ENCODE measurements at regions of chr3 and their contacts with region 1.

Region 1: GRCh38 chr3:30606301-30607031 is at the start of gene TGFBR2:
- DNase-seq: peak; percentile 90
- H3K4me3 Mint-ChIP-seq: peak within 1 kb of the TSS; percentile 91
- H3K27ac Mint-ChIP-seq: peak within 1 kb of the TSS; percentile 98
- H3K4me1 Mint-ChIP-seq: peaks cover 67% of the 10 kb centered on the region
- H3K27me3 Mint-ChIP-seq: no peaks in the 10 kb centered on the region

Region 2: GRCh38 chr3:30586096-30586805 is 20.2 kb before region 1 on chr3:
- CTCF ChIA-PET with region 1: no interaction called
- DNase-seq: no peak
- H3K4me3 Mint-ChIP-seq: no peak overlapping the region
- H3K27ac Mint-ChIP-seq: no peak overlapping the region
- H3K4me1 Mint-ChIP-seq: no peaks in the 10 kb centered on the region
- H3K27me3 Mint-ChIP-seq: no peaks in the 10 kb centered on the region

Region 3: DNA sequence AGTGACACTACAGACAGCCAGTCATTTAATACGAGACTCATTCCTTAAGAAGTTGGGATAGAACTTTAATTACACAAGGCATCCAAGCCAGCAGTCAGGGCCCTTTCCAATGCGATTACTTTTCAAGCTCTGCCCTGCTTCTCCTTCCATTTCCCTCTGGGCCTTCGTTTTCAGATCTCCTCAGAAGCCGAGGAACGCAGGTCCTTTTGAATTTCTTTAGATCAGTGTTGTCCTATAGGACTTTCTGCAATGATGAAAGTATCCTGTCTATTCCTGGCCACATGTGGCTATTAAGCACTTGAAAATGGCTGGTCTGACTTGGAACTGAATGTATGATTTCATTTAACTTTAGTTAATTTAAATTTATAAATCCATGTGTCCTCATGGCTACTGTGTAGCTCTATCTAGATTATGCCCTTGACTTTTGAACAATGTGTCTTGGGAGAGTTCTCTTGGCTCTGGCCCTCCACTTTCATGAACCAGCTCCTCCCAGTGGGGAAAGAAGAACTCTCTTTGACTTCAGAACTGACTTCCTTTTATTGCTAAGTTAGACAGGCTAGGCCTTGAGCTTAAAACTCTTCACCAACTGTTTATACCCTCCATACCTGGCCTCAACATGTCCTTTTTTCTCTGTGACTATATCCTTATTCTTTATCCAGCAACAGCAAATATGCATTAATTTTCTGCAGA is 22.6 kb after region 1 on chr3:
- CTCF ChIA-PET with region 1: interaction called, 10 read pairs
- DNase-seq: peak; percentile 48
- H3K4me3 Mint-ChIP-seq: peak overlapping the region; percentile 19
- H3K27ac Mint-ChIP-seq: peak overlapping the region; percentile 99
- H3K4me1 Mint-ChIP-seq: peaks cover 97% of the 10 kb centered on the region
- H3K27me3 Mint-ChIP-seq: no peaks in the 10 kb centered on the region

Measured in activated naive CD4-positive, alpha-beta T cell treated with anti-CD3 and anti-CD28 coated beads, Interleukin-2, amount 10 ng/mL, durations not matched to agents 7 days and 5 days (primary cell).